BJ (cell line): ENCODE measurements at regions of chr6 and their contacts with region 1.

Region 1: GRCh38 chr6:151014404-151015100 is 149.1 kb downstream of the MTHFD1L start:
- DNase-seq: no peak
- H3K4me3 ChIP-seq: no peak overlapping the region
- H3K27me3 ChIP-seq: no peaks in the 10 kb centered on the region
- CTCF ChIP-seq: peak; percentile 95

Region 2: GRCh38 chr6:151004415-151005024 is 10.0 kb before region 1 on chr6:
- CTCF ChIA-PET with region 1: interaction called, 31 read pairs
- POLR2A ChIA-PET with region 1: no interaction called
- DNase-seq: peak; percentile 75
- H3K4me3 ChIP-seq: no peak overlapping the region
- H3K27me3 ChIP-seq: no peaks in the 10 kb centered on the region
- CTCF ChIP-seq: no peak

Region 3: DNA sequence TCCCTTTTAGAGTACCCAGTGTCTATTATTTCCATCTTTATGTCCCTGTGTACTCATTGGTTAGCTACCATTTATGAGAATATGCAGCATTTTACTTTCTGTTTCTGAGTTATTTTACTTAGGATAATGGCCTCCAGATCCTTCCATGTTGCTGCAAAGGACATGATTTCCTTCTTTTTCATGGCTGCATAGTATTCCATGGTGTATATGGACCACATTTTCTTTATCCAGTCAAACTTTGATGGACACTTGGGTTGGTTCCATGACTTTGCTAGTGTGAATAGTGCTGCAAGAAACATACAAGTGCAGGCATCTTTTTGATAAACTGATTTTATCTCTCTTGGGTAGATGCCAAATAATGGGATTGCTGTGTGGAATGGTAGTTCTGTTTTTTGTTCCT is 321.4 kb after region 1 on chr6:
- CTCF ChIA-PET with region 1: interaction called, 166 read pairs
- POLR2A ChIA-PET with region 1: no interaction called
- DNase-seq: no peak
- H3K4me3 ChIP-seq: no peak overlapping the region
- H3K27me3 ChIP-seq: no peaks in the 10 kb centered on the region
- CTCF ChIP-seq: no peak